IMR-90 (cell line): ENCODE measurements at regions of chr11 and their contacts with region 1.

Region 1: GRCh38 chr11:35923452-35923851 is 20.4 kb upstream of the LDLRAD3 start:
- DNase-seq: no peak
- ATAC-seq: no peak
- H3K4me3 ChIP-seq: no peak overlapping the region
- H3K27ac ChIP-seq: no peak overlapping the region
- H3K4me1 ChIP-seq: no peaks in the 10 kb centered on the region
- H3K27me3 ChIP-seq: peaks cover 7% of the 10 kb centered on the region
- CTCF ChIP-seq: no peak
- POLR2A ChIP-seq: no peak
- RAD21 ChIP-seq: no peak

Region 2: DNA sequence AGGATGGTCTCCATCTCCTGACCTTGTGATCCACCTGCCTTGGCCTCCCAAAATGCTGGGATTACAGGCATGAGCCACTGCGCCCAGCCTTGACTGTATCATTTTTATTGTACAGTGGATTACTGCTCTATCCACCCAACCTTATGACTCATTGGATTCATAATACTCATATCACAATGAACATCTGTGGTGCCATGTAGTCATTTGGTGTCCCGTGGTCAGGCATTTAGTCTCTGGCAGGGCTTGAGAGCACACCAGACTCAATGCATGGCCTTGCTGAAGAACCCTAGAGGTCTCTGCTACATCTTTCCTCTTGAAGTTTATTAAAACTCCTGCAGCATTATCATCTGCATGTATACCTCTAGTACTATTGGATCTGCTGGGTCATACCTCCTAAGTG is 77.6 kb before region 1 on chr11:
- CTCF ChIA-PET with region 1: no interaction called
- POLR2A ChIA-PET with region 1: no interaction called
- dilution Hi-C with region 1: no loop called
- in situ Hi-C with region 1: no loop called
- intact Hi-C with region 1: loop called (anchors 5 kb)
- DNase-seq: no peak
- ATAC-seq: no peak
- H3K4me3 ChIP-seq: no peak overlapping the region
- H3K27ac ChIP-seq: no peak overlapping the region
- H3K4me1 ChIP-seq: no peaks in the 10 kb centered on the region
- H3K27me3 ChIP-seq: peaks cover 37% of the 10 kb centered on the region
- CTCF ChIP-seq: no peak
- POLR2A ChIP-seq: no peak
- RAD21 ChIP-seq: no peak